ENCODE measurements at regions of chr2 and their contacts with region 1.

Region 1: GRCh38 chr2:86552889-86553288 is 10.4 kb downstream of the CHMP3 start:
- DNase-seq: peak in 7 of 9 donors; percentile 42 to 75 (median 68)
- ATAC-seq: peak; percentile 87
- H3K4me3 ChIP-seq: peak overlapping the region; percentile 22
- H3K4me3 Mint-ChIP-seq: peak overlapping the region; percentile 61 to 90 (median 83)
- H3K27ac ChIP-seq: peak overlapping the region; percentile 8
- H3K27ac Mint-ChIP-seq: peak overlapping the region in 7 of 9 donors; percentile 71 to 98 (median 93)
- H3K4me1 ChIP-seq: peaks cover 13 to 30% of the 10 kb centered on the region in 2 donors
- H3K4me1 Mint-ChIP-seq: peaks cover 1 to 42% (median 19%) of the 10 kb centered on the region in 7 donors
- H3K27me3 ChIP-seq: no peaks in the 10 kb centered on the region
- H3K27me3 Mint-ChIP-seq: no peaks in the 10 kb centered on the region

Region 2: GRCh38 chr2:85561317-85561979 is 991.4 kb before region 1 on chr2 and contains the start of gene GGCX:
- CTCF ChIA-PET with region 1: no interaction called
- POLR2A ChIA-PET with region 1: no interaction called
- intact Hi-C with region 1: no loop called
- DNase-seq: peak; percentile 77 to 92 (median 88)
- ATAC-seq: peak; percentile 98
- H3K4me3 ChIP-seq: peak within 1 kb of the TSS; percentile 98
- H3K4me3 Mint-ChIP-seq: peak within 1 kb of the TSS; percentile 81 to 99 (median 97)
- H3K27ac ChIP-seq: peak within 1 kb of the TSS; percentile 95
- H3K27ac Mint-ChIP-seq: peak within 1 kb of the TSS; percentile 86 to 99 (median 95)
- H3K4me1 ChIP-seq: peaks cover 6 to 8% of the 10 kb centered on the region in 2 donors
- H3K4me1 Mint-ChIP-seq: peaks cover 17 to 48% (median 32%) of the 10 kb centered on the region in 7 donors
- H3K27me3 ChIP-seq: no peaks in the 10 kb centered on the region
- H3K27me3 Mint-ChIP-seq: no peaks in the 10 kb centered on the region
- total RNA-seq, gene GGCX: 20.4 to 34.2 (median 26.3) TPM

Region 3: DNA sequence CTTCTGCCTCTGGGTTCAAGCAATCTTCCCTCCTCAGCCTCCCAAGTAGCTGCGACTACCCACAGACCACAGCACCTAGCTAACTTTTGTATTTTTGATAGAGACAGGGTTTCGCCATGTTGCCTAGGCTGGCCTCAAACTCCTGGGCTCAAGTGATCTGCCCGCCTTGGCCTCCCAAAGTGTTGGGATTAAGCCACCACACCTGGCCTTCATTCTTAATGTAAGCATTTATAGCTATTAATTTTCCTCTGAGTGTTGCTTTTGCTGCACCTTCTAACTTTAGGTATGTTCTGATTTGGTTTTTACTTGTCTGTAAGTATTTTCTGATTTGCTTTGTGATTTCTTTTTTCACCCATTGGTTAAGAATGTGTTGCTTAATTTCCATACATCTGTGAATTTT is 19.3 kb before region 1 on chr2:
- CTCF ChIA-PET with region 1: no interaction called
- POLR2A ChIA-PET with region 1: interaction called, 3 read pairs
- intact Hi-C with region 1: loop called in 1 of 2 experiments (anchors 2 kb)
- DNase-seq: no peak
- ATAC-seq: no peak
- H3K4me3 ChIP-seq: no peak overlapping the region
- H3K4me3 Mint-ChIP-seq: peak overlapping the region in 2 of 10 donors; percentile 47 to 51
- H3K27ac ChIP-seq: no peak overlapping the region
- H3K27ac Mint-ChIP-seq: peak overlapping the region in 5 of 9 donors; percentile 48 to 84 (median 57)
- H3K4me1 ChIP-seq: peaks cover 0 to 20% of the 10 kb centered on the region in 2 donors
- H3K4me1 Mint-ChIP-seq: peaks cover 7 to 60% (median 52%) of the 10 kb centered on the region in 7 donors
- H3K27me3 ChIP-seq: no peaks in the 10 kb centered on the region
- H3K27me3 Mint-ChIP-seq: no peaks in the 10 kb centered on the region

Region 4: DNA sequence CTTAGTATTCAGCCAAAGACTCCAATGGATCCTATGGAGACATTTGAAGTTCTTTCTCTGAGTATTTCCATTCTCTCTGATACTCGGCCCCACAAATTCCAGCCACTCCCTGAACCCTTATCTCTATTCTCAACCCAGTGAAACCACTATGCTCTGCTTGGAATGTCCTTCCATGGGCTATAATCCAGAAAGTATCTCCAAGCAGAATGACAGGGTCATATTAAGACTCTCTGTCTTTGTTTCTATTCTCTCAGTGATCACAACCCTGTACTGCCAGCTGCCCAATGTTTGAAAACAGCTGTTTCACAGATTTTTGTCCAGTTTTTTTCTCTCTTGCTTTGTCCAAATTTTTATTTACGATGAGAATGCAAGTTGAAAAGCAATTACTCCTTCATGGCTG is 11.6 kb before region 1 on chr2:
- CTCF ChIA-PET with region 1: no interaction called
- POLR2A ChIA-PET with region 1: interaction called, 14 read pairs
- intact Hi-C with region 1: no loop called
- DNase-seq: no peak
- ATAC-seq: no peak
- H3K4me3 ChIP-seq: no peak overlapping the region
- H3K4me3 Mint-ChIP-seq: no peak overlapping the region
- H3K27ac ChIP-seq: no peak overlapping the region
- H3K27ac Mint-ChIP-seq: peak overlapping the region in 3 of 9 donors; percentile 2 to 49 (median 35)
- H3K4me1 ChIP-seq: no peaks in the 10 kb centered on the region
- H3K4me1 Mint-ChIP-seq: peaks cover 0 to 49% (median 37%) of the 10 kb centered on the region in 7 donors
- H3K27me3 ChIP-seq: no peaks in the 10 kb centered on the region
- H3K27me3 Mint-ChIP-seq: no peaks in the 10 kb centered on the region

Measured in naive thymus-derived CD4-positive, alpha-beta T cell (primary cell).